ENCODE measurements at regions of chrX and their contacts with region 1.

Region 1: DNA sequence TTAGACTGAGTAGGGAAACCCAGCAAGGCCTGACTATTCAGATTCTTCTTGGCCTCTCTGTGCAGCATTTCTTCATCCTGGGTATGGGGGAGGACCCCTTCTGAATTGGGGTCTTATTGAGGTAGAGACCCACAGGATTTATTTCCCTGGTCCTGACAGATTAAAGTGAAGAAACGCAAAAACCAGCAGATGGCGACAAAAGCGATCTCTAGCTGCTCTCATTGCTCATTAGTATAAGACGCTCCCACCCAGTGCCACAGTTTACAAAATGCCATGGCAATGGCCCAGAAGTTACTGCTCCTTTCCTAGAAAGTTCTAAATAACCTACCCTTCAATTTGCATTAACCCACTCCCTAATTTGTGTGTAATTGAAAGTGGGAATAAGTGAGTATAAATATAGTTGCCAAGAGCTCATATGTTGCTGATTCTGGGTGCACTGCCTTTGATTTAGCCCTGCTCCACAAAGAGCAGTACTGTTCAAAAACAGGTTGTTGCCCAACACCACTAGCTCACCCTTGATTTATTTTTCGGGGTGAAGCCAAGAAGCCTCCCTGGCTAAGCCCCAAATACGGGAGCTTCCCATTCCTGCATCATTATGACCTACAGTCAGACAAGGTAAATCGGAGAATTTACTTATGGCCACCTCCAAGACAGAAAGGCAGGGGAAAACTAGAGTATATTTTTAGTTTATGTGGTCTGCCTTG is 3.7 kb upstream of the BEX4 start:
- DNase-seq: peak; percentile 53
- H3K4me3 Mint-ChIP-seq: no peak overlapping the region
- H3K27ac Mint-ChIP-seq: no peak overlapping the region
- H3K4me1 Mint-ChIP-seq: no peaks in the 10 kb centered on the region
- H3K27me3 Mint-ChIP-seq: peaks cover 38% of the 10 kb centered on the region
- CTCF ChIP-seq: peak; percentile 39

Region 2: DNA sequence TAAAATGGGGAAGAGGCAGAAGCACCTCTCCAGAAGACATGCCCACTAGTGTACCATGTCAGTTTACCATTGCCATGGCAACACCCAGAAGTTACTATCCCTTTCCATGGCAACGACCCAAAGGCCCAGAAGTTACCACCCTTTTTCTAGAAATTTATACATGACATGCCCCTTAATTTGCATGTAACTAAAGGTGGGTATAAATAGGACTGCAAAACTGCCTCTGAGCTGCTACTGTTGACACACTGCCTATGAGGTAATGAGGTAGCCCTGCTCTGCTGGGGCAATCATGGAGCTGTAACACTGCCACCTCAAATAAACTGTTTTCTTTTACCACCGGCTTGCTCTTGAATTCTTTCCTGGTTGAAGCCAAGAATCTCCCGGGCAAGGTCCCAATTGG is 10.1 kb before region 1 on chrX:
- CTCF ChIA-PET with region 1: interaction called, 13 read pairs
- POLR2A ChIA-PET with region 1: no interaction called
- intact Hi-C with region 1: no loop called
- DNase-seq: no peak
- H3K4me3 Mint-ChIP-seq: no peak overlapping the region
- H3K27ac Mint-ChIP-seq: no peak overlapping the region
- H3K4me1 Mint-ChIP-seq: peaks cover 8% of the 10 kb centered on the region
- H3K27me3 Mint-ChIP-seq: peaks cover 42% of the 10 kb centered on the region
- CTCF ChIP-seq: no peak

Region 3: DNA sequence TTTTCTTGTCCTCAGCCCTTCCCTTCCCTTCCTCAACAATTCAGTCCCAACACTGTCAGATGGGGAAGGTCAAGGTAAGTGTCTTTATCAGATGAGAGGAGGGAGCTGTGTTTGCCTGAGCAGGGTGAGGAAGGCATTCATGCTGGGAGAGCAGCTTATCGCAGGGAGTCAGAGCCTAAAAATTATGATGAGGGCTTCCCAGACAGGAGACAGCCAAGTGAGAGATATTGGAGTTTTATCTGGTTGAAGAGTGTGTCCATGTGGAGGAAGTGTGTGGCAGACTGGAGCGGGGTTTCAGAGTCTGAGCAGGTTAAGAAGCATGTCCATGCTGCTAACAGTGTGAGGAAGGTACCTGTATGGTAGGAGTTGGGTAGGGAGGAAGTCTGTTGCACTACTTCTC is 22.1 kb after region 1 on chrX:
- CTCF ChIA-PET with region 1: interaction called, 12 read pairs
- POLR2A ChIA-PET with region 1: no interaction called
- intact Hi-C with region 1: no loop called
- DNase-seq: no peak
- H3K4me3 Mint-ChIP-seq: no peak overlapping the region
- H3K27ac Mint-ChIP-seq: no peak overlapping the region
- H3K4me1 Mint-ChIP-seq: no peaks in the 10 kb centered on the region
- H3K27me3 Mint-ChIP-seq: peaks cover 60% of the 10 kb centered on the region
- CTCF ChIP-seq: no peak

Region 4: GRCh38 chrX:103248553-103248952 is 37.4 kb after region 1 on chrX:
- CTCF ChIA-PET with region 1: interaction called, 10 read pairs
- POLR2A ChIA-PET with region 1: no interaction called
- intact Hi-C with region 1: loop called (anchors 2 kb)
- DNase-seq: peak; percentile 24
- H3K4me3 Mint-ChIP-seq: no peak overlapping the region
- H3K27ac Mint-ChIP-seq: no peak overlapping the region
- H3K4me1 Mint-ChIP-seq: no peaks in the 10 kb centered on the region
- H3K27me3 Mint-ChIP-seq: peaks cover 32% of the 10 kb centered on the region
- CTCF ChIP-seq: peak; percentile 29

Region 5: DNA sequence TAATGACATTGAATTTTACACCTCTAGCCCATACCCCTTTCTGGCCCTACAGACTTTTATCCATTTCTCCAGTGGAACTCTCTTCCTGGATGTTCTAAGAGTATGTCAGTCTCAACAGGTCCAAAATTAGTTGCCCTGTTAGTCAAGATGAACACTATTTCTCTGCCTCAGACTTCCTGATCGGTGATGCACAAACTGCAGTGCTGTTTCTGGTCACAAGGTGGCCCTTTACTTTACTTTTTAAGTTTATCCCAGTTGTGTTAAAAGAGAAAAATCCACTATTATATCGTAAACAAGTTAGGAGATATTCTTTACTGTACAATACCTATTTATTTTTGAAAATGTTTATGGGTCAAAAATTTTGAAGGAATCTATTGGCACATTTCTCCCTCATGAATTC is 131.9 kb after region 1 on chrX:
- CTCF ChIA-PET with region 1: interaction called, 3 read pairs
- POLR2A ChIA-PET with region 1: interaction called, 3 read pairs
- intact Hi-C with region 1: loop called (anchors 1 kb)
- DNase-seq: peak; percentile 47
- H3K4me3 Mint-ChIP-seq: no peak overlapping the region
- H3K27ac Mint-ChIP-seq: peak overlapping the region; percentile 28
- H3K4me1 Mint-ChIP-seq: no peaks in the 10 kb centered on the region
- H3K27me3 Mint-ChIP-seq: peaks cover 63% of the 10 kb centered on the region
- CTCF ChIP-seq: peak; percentile 65

Region 6: GRCh38 chrX:103488332-103488731 is 277.2 kb after region 1 on chrX:
- CTCF ChIA-PET with region 1: interaction called, 14 read pairs
- POLR2A ChIA-PET with region 1: no interaction called
- intact Hi-C with region 1: no loop called
- DNase-seq: peak; percentile 41
- H3K4me3 Mint-ChIP-seq: no peak overlapping the region
- H3K27ac Mint-ChIP-seq: no peak overlapping the region
- H3K4me1 Mint-ChIP-seq: no peaks in the 10 kb centered on the region
- H3K27me3 Mint-ChIP-seq: peaks cover 48% of the 10 kb centered on the region
- CTCF ChIP-seq: peak; percentile 53

Region 7: DNA sequence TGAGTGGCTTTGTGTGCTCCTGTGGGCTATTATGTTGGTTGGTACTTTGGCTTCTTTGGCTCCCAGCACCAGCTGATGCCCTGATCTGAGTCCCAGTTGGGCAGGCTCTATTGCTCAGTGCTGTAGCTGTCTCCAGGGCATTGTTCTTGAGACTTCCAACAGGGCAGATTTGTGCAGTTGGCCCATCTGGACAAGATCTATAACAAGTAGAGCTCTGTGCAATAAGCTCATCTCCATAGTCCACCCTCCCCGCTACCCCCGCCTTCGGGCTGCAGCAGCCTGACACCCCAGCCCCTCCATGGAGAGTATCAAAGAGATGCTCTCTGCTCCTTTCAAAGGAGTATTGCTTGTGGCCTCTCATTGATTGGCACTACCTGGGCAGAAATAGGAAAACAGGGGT is 493.7 kb after region 1 on chrX:
- CTCF ChIA-PET with region 1: no interaction called
- POLR2A ChIA-PET with region 1: no interaction called
- intact Hi-C with region 1: no loop called
- DNase-seq: no peak
- H3K4me3 Mint-ChIP-seq: no peak overlapping the region
- H3K27ac Mint-ChIP-seq: no peak overlapping the region
- H3K4me1 Mint-ChIP-seq: no peaks in the 10 kb centered on the region
- H3K27me3 Mint-ChIP-seq: peaks cover 81% of the 10 kb centered on the region
- CTCF ChIP-seq: no peak

Region 8: GRCh38 chrX:105167233-105167632 is 1956.1 kb after region 1 on chrX:
- CTCF ChIA-PET with region 1: no interaction called
- POLR2A ChIA-PET with region 1: no interaction called
- intact Hi-C with region 1: no loop called
- DNase-seq: peak; percentile 47
- H3K4me3 Mint-ChIP-seq: no peak overlapping the region
- H3K27ac Mint-ChIP-seq: no peak overlapping the region
- H3K4me1 Mint-ChIP-seq: no peaks in the 10 kb centered on the region
- H3K27me3 Mint-ChIP-seq: peaks cover 50% of the 10 kb centered on the region
- CTCF ChIP-seq: no peak

Measured in MCF 10A (cell line).